Left colon (tissue), 2 donors: ENCODE measurements at regions of chr15 and their contacts with region 1.

Region 1: DNA sequence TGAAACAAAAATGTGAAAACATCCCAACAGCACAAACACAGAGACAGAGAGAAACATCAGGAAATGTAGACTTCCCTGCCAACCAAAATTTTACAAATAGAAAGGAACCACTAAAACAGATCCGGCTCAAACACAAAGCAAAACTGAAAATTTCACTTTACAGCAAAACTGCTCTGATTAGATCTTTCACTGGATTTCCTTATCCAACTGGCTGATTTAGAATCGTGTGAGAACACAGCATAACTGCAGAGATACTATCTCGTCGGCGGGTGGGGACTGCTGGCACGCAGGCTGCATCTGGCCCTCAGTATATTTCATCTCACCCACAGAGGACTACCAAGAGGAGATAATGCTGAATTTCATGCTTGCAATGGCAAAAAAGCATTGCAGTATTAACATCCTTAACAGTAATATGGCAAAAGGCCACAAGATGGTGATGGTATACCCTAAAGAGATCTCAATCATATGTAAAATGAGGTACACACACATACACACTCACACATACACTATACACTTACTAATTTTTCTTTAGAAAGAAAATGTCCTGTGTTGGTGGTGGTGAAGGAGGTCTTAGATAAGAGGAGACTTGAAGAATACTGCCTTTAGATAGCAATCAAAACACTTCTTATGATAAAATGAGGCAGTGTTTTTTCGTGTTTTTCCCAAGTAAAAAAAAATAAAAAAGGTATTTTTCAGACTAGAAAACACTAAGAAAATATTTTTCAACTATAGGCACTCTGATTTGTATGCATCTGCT is 10.6 kb upstream of the LEO1 start:
- DNase-seq: peak; percentile 35 to 47
- ATAC-seq: peak; percentile 74

Region 2: GRCh38 chr15:50890771-50891558 is 1091.2 kb before region 1 on chr15:
- intact Hi-C with region 1: no loop called
- DNase-seq: no peak
- ATAC-seq: no peak

Region 3: DNA sequence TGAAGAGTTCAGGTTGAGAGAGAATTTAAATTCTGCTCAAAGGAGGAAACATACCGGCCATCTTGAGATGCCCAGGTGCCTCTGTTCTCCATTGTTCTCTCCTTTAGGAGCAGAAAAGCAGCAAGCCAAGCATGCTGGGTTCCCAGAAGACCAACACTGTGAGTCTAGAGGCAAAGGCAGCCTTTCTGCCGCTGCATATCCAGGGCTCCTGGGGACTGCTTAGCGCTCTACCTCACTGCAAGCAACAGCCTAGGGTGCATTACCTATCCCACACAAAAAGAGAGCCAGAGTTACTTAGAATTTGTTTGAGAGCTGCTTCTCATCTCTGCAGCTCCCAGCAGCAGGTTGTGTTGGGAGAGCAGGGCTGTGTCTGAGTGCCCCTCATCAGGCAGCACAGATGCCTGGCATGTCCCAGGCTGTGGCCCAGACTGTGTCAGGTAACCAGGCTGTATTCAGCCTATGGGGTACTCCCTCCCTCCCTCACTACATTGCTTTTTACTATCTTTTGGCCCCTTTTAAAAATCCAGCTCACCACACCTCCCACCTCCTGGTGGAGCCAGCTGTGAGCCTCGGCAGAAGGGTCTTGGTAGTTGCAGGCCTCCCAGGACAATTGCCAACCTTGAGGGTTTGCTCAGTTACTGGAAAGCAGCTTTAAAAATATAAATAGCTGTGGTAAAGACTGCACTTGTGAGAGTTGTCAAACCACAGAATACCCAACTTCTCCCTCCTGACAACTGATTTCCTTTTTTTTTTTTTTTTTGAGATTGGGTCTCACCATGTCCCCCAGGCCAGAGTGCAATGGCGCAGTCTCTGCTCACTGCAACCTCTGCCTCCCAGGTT is 100.2 kb after region 1 on chr15:
- intact Hi-C with region 1: loop called in 1 of 2 experiments (anchors 5 kb)
- DNase-seq: no peak
- ATAC-seq: no peak

Region 4: GRCh38 chr15:52139599-52140491 is 157.7 kb after region 1 on chr15:
- intact Hi-C with region 1: loop called in 1 of 2 experiments (anchors 10 kb)
- DNase-seq: peak; percentile 59 to 89
- ATAC-seq: peak; percentile 49

Region 5: DNA sequence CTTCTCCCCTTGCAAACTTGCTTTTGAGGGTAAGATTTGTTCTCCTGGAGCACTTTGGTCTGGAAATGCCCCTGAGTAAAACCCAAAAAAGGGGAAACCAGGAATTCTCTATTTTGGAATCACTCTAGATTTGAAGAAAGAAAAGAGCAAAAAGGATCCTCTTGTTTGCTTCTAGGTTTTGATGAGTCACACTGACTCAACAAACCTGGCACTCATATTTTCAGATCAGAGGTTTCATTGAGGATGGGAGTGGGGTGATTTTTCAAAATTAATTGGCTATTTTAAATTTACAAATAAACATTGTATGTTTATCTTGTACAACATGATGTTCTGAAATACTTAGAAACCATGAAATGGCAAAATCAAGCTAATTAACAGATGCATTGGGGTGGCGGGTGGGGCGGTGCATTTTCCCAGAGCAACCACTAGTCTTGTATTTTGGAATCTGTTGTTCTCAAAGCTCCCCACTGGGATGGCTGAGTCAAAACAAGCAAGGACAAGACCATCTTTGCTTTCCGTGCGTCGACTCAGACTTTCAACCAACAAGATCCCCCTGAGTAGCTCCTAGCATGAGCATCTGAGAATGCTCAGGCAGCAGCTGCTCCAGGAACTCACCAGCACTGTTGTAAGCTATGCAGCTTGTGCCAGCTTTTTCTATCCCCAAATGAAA is 1325.9 kb after region 1 on chr15:
- intact Hi-C with region 1: no loop called
- DNase-seq: no peak
- ATAC-seq: no peak